CD14-positive monocyte (primary cell): ENCODE measurements at regions of chr19 and their contacts with region 1.

Region 1: GRCh38 chr19:39008137-39008536 is 24.2 kb downstream of the FBXO27 start:
- DNase-seq: no peak
- H3K4me3 ChIP-seq: no peak overlapping the region
- H3K4me3 Mint-ChIP-seq: no peak overlapping the region
- H3K27ac ChIP-seq: no peak overlapping the region
- H3K27ac Mint-ChIP-seq: no peak overlapping the region
- H3K4me1 ChIP-seq: no peaks in the 10 kb centered on the region
- H3K4me1 Mint-ChIP-seq: no peaks in the 10 kb centered on the region
- H3K27me3 ChIP-seq: no peaks in the 10 kb centered on the region
- H3K27me3 Mint-ChIP-seq: peaks cover 2 to 23% (median 12%) of the 10 kb centered on the region in 3 donors
- CTCF ChIP-seq: no peak

Region 2: GRCh38 chr19:38945562-38946228 is 62.4 kb before region 1 on chr19:
- intact Hi-C with region 1: loop called in 1 of 2 experiments (anchors 2 kb)
- DNase-seq: no peak
- H3K4me3 ChIP-seq: no peak overlapping the region
- H3K4me3 Mint-ChIP-seq: no peak overlapping the region
- H3K27ac ChIP-seq: no peak overlapping the region
- H3K27ac Mint-ChIP-seq: no peak overlapping the region
- H3K4me1 ChIP-seq: peaks cover 7 to 10% of the 10 kb centered on the region in 2 donors
- H3K4me1 Mint-ChIP-seq: peaks cover 11% of the 10 kb centered on the region
- H3K27me3 ChIP-seq: peaks cover 0 to 11% of the 10 kb centered on the region in 2 donors
- H3K27me3 Mint-ChIP-seq: peaks cover 21 to 31% (median 24%) of the 10 kb centered on the region in 3 donors
- CTCF ChIP-seq: no peak